ENCODE measurements at regions of chr10 and their contacts with region 1.

Region 1: GRCh38 chr10:96470116-96470743 is 43.5 kb downstream of the TLL2 start:
- DNase-seq: peak; percentile 19
- H3K4me3 ChIP-seq: no peak overlapping the region
- H3K27ac ChIP-seq: no peak overlapping the region
- H3K4me1 ChIP-seq: no peaks in the 10 kb centered on the region
- H3K27me3 ChIP-seq: peaks cover 1% of the 10 kb centered on the region
- CTCF ChIP-seq: peak; percentile 71 to 82

Region 2: DNA sequence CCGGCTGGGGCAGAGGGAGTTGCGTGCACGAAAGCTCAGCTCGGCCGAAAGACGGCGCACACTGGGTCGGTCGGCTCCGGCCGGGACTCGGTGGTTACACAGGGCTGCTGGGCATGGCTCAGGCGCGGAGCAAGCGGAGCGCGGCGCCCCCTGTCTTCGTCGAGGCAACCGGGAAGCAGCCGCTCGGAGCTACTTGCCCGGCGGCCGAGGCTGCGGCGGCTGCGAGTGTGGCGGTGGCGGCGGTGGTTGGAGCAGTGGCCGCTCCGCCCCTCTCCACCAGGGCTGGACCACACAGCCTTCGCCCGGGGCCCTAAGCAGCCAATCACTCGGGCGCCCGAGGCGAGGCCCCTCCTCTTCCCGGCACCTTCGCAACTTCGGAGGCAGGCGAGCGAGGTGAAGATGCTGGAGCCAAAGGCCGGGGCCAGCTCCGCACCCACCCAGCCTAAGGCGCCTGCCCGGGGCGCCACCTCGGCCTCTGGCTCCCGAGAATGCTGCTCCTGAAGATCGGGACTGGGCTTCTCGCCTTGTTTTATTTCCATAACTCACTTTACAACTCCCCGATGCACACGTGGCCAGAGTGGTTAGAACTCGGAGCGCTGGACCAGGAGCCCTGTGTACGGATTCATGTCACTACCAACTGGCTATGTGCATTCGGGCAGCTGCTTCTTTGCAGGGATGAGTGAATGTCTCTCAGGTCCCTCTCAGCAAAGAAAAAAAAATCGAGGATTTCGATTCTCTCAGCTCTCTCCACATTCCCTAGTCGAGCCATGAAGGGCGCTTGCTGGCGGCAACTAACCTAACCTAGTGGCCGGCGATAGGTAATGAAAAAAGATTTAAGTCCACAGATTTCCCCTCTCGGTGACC is 43.7 kb after region 1 on chr10 and contains the start of gene TLL2:
- CTCF ChIA-PET with region 1: no interaction called
- dilution Hi-C with region 1: no loop called
- in situ Hi-C with region 1: no loop called
- intact Hi-C with region 1: loop called (anchors 1 kb)
- DNase-seq: peak; percentile 91
- H3K4me3 ChIP-seq: peak within 1 kb of the TSS; percentile 35 to 65 (median 54)
- H3K27ac ChIP-seq: no peak within 1 kb of the TSS
- H3K4me1 ChIP-seq: peaks cover 28% of the 10 kb centered on the region
- H3K27me3 ChIP-seq: no peaks in the 10 kb centered on the region
- CTCF ChIP-seq: peak; percentile 15 to 74
- total RNA-seq, gene TLL2: 0.17 to 0.59 TPM

Measured in mammary epithelial cell (primary cell).